Naive thymus-derived CD4-positive, alpha-beta T cell (primary cell): ENCODE measurements at regions of chr9 and their contacts with region 1.

Region 1: DNA sequence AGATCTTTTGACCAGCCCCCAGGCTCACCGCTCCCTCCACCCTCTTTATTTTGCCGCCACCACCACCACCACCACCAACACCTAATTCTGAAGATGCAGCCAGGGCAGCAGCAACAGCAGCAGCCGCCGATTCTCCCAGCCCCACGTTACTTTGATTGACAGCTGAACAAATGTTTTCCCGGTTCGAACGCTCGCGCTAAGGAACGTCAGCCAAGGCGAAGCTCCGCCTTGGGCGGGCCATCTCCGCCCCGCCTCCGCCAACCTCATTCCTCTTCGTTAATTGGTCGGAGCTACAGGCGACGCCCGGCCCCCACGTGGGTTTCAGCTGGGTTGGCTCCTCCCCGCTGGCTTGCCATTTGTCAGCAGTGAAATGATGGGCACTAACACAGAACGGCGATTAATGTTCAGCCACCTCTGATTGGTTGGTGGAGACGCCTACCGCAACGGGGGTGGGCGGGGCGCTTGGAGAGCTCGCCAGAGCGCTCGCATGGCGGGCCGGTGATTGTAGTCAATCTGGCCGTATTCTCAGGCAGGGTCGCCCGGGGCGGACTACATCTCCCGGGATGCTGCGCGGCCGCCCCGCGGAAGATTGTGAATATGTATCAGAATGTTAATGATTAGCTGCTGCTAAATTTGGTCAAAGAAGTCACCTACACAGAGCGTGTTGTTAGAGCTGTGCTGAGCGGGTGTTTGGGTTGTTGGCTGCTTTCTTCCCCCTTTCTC is at the start of gene TLE4:
- DNase-seq: peak; percentile 96 to 100 (median 100)
- ATAC-seq: peak; percentile 90
- H3K4me3 ChIP-seq: peak within 1 kb of the TSS; percentile 95
- H3K4me3 Mint-ChIP-seq: peak within 1 kb of the TSS in 7 of 10 donors; percentile 59 to 91 (median 78)
- H3K27ac ChIP-seq: peak within 1 kb of the TSS; percentile 87
- H3K27ac Mint-ChIP-seq: peak within 1 kb of the TSS in 4 of 9 donors; percentile 52 to 74 (median 68)
- H3K4me1 ChIP-seq: peaks cover 17 to 19% of the 10 kb centered on the region in 2 donors
- H3K4me1 Mint-ChIP-seq: peaks cover 22 to 40% (median 32%) of the 10 kb centered on the region in 7 donors
- H3K27me3 ChIP-seq: no peaks in the 10 kb centered on the region
- H3K27me3 Mint-ChIP-seq: peaks cover 0 to 34% (median 5%) of the 10 kb centered on the region in 5 donors
- total RNA-seq, gene TLE4: 21.0 to 196 (median 106) TPM

Region 2: GRCh38 chr9:78074385-78075291 is 1496.8 kb before region 1 on chr9:
- CTCF ChIA-PET with region 1: no interaction called
- POLR2A ChIA-PET with region 1: no interaction called
- intact Hi-C with region 1: loop called in 1 of 2 experiments (anchors 10 kb)
- DNase-seq: peak in 7 of 9 donors; percentile 10 to 54 (median 44)
- ATAC-seq: peak; percentile 67
- H3K4me3 ChIP-seq: peak overlapping the region; percentile 25
- H3K4me3 Mint-ChIP-seq: peak overlapping the region; percentile 64 to 84 (median 76)
- H3K27ac ChIP-seq: peak overlapping the region; percentile 57
- H3K27ac Mint-ChIP-seq: peak overlapping the region; percentile 60 to 94 (median 85)
- H3K4me1 ChIP-seq: peaks cover 19 to 24% of the 10 kb centered on the region in 2 donors
- H3K4me1 Mint-ChIP-seq: peaks cover 38 to 60% (median 58%) of the 10 kb centered on the region in 7 donors
- H3K27me3 ChIP-seq: no peaks in the 10 kb centered on the region
- H3K27me3 Mint-ChIP-seq: peaks cover 0 to 5% (median 0%) of the 10 kb centered on the region in 5 donors

Region 3: DNA sequence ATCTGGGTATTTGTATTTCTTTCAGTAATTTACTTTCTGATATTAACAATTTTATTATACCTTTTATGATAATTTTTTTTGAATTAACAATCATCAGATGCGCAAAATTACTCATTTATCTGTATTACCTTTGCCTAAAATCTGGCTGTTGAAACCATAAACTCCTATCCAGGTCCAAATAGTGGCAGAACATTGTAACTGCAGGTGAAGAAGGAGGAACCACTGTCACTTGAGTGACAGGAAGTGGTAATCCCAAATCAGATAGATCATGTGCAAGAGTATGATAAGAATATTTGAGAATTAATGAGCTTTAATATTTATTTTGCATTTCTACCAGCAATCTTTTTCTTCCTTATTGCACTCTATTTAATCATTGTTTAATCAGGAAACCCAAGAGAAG is 139.0 kb before region 1 on chr9:
- CTCF ChIA-PET with region 1: no interaction called
- POLR2A ChIA-PET with region 1: interaction called, 10 read pairs
- intact Hi-C with region 1: no loop called
- DNase-seq: peak in 3 of 9 donors; percentile 4 to 9 (median 7)
- ATAC-seq: no peak
- H3K4me3 ChIP-seq: no peak overlapping the region
- H3K4me3 Mint-ChIP-seq: no peak overlapping the region
- H3K27ac ChIP-seq: no peak overlapping the region
- H3K27ac Mint-ChIP-seq: no peak overlapping the region
- H3K4me1 ChIP-seq: no peaks in the 10 kb centered on the region
- H3K4me1 Mint-ChIP-seq: peaks cover 0 to 4% (median 0%) of the 10 kb centered on the region in 7 donors
- H3K27me3 ChIP-seq: no peaks in the 10 kb centered on the region
- H3K27me3 Mint-ChIP-seq: peaks cover 0 to 21% (median 4%) of the 10 kb centered on the region in 5 donors

Region 4: DNA sequence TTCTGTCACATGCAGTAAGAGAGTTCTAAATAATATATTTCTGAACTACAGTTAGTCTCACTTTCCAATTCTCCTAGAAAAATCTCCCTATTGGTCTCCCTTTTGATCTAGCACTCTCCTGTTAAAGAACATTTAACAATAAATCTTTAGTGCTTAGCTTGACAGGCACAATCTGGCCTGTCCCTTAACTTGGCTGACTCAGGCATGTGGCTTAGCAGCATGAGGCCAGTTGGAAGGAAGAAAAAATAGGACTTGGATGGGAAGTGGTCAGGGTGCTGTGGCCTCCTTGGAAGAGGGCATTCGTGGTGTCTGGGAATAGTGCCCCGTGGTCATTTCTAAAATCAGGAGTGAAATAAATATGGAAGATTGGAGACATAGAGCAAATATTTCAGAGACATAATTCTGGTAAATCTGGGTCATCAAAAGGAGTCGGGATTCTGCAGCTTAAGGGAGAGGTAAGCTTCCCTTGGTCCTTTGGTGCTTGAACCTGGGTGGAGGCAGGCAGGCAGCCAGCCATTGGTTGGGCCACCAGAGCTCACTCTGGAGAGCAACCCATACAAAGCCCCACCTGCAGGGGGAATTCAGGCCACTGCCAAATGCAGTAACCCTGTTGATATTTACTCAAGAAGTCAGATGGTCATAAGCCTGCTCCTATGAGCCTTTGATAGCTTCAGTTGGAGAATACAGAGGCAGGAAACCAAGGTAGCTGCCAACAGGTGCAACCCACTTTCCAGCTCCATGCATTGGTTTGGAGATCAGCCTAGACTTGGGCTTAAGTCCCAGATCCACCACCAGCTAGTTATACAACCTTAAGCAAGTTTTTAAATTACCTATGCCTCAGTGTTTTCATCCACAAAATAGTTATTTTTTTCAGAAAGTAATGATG is 28.5 kb before region 1 on chr9:
- CTCF ChIA-PET with region 1: interaction called, 6 read pairs
- POLR2A ChIA-PET with region 1: interaction called, 19 read pairs
- intact Hi-C with region 1: loop called in 1 of 2 experiments (anchors 1 kb)
- DNase-seq: no peak
- ATAC-seq: no peak
- H3K4me3 ChIP-seq: no peak overlapping the region
- H3K4me3 Mint-ChIP-seq: peak overlapping the region in 1 of 10 donors; percentile 74
- H3K27ac ChIP-seq: no peak overlapping the region
- H3K27ac Mint-ChIP-seq: peak overlapping the region in 3 of 9 donors; percentile 8 to 87 (median 76)
- H3K4me1 ChIP-seq: peaks cover 0 to 11% of the 10 kb centered on the region in 2 donors
- H3K4me1 Mint-ChIP-seq: peaks cover 10 to 29% (median 24%) of the 10 kb centered on the region in 7 donors
- H3K27me3 ChIP-seq: no peaks in the 10 kb centered on the region
- H3K27me3 Mint-ChIP-seq: peaks cover 0 to 3% (median 0%) of the 10 kb centered on the region in 5 donors

Region 5: GRCh38 chr9:79623799-79624721 is 52.6 kb after region 1 on chr9:
- CTCF ChIA-PET with region 1: interaction called, 3 read pairs
- POLR2A ChIA-PET with region 1: interaction called, 5 read pairs
- intact Hi-C with region 1: loop called in 1 of 2 experiments (anchors 2 kb)
- DNase-seq: peak in 3 of 9 donors; percentile 5 to 26 (median 8)
- ATAC-seq: peak; percentile 89
- H3K4me3 ChIP-seq: peak overlapping the region; percentile 22
- H3K4me3 Mint-ChIP-seq: peak overlapping the region; percentile 62 to 76 (median 72)
- H3K27ac ChIP-seq: no peak overlapping the region
- H3K27ac Mint-ChIP-seq: peak overlapping the region; percentile 8 to 89 (median 29)
- H3K4me1 ChIP-seq: peaks cover 10 to 11% of the 10 kb centered on the region in 2 donors
- H3K4me1 Mint-ChIP-seq: peaks cover 16 to 68% (median 67%) of the 10 kb centered on the region in 7 donors
- H3K27me3 ChIP-seq: no peaks in the 10 kb centered on the region
- H3K27me3 Mint-ChIP-seq: no peaks in the 10 kb centered on the region

Region 6: GRCh38 chr9:79709743-79710674 is 138.5 kb after region 1 on chr9:
- CTCF ChIA-PET with region 1: no interaction called
- POLR2A ChIA-PET with region 1: no interaction called
- intact Hi-C with region 1: loop called in 1 of 2 experiments (anchors 5 kb)
- DNase-seq: no peak
- ATAC-seq: no peak
- H3K4me3 ChIP-seq: no peak overlapping the region
- H3K4me3 Mint-ChIP-seq: no peak overlapping the region
- H3K27ac ChIP-seq: no peak overlapping the region
- H3K27ac Mint-ChIP-seq: peak overlapping the region in 2 of 9 donors; percentile 14
- H3K4me1 ChIP-seq: no peaks in the 10 kb centered on the region
- H3K4me1 Mint-ChIP-seq: peaks cover 0 to 18% (median 9%) of the 10 kb centered on the region in 7 donors
- H3K27me3 ChIP-seq: no peaks in the 10 kb centered on the region
- H3K27me3 Mint-ChIP-seq: no peaks in the 10 kb centered on the region

Region 7: DNA sequence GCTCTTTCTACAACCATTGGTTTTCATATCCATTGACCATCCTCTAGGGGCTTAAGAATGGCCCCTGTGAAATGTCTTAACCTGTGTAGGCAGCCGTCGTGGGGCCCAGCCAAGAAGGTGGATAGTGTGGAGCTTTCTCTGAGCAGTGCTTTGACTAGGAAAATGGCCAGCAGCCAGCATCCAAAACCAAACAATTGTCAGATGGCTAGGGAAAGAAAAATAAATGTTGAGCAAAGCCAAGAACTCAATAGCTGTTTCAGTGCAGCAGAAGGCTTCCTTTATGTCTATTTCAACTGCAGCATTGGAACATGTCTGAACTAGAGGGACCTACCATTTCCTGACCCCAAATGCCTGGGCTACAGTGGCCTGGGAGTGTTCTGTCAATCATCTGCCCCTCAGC is 375.2 kb after region 1 on chr9:
- CTCF ChIA-PET with region 1: interaction called, 4 read pairs
- POLR2A ChIA-PET with region 1: no interaction called
- intact Hi-C with region 1: loop called in 1 of 2 experiments (anchors 5 kb)
- DNase-seq: no peak
- ATAC-seq: no peak
- H3K4me3 ChIP-seq: no peak overlapping the region
- H3K4me3 Mint-ChIP-seq: no peak overlapping the region
- H3K27ac ChIP-seq: no peak overlapping the region
- H3K27ac Mint-ChIP-seq: no peak overlapping the region
- H3K4me1 ChIP-seq: no peaks in the 10 kb centered on the region
- H3K4me1 Mint-ChIP-seq: no peaks in the 10 kb centered on the region
- H3K27me3 ChIP-seq: no peaks in the 10 kb centered on the region
- H3K27me3 Mint-ChIP-seq: no peaks in the 10 kb centered on the region